ENCODE measurements at regions of chr14 and their contacts with region 1.

Region 1: GRCh38 chr14:100108042-100108825 is 43.0 kb downstream of the EVL start:
- DNase-seq: peak; percentile 88
- H3K4me3 Mint-ChIP-seq: no peak overlapping the region
- H3K27ac Mint-ChIP-seq: peak overlapping the region; percentile 87
- H3K4me1 Mint-ChIP-seq: peaks cover 80% of the 10 kb centered on the region
- H3K27me3 Mint-ChIP-seq: no peaks in the 10 kb centered on the region

Region 2: DNA sequence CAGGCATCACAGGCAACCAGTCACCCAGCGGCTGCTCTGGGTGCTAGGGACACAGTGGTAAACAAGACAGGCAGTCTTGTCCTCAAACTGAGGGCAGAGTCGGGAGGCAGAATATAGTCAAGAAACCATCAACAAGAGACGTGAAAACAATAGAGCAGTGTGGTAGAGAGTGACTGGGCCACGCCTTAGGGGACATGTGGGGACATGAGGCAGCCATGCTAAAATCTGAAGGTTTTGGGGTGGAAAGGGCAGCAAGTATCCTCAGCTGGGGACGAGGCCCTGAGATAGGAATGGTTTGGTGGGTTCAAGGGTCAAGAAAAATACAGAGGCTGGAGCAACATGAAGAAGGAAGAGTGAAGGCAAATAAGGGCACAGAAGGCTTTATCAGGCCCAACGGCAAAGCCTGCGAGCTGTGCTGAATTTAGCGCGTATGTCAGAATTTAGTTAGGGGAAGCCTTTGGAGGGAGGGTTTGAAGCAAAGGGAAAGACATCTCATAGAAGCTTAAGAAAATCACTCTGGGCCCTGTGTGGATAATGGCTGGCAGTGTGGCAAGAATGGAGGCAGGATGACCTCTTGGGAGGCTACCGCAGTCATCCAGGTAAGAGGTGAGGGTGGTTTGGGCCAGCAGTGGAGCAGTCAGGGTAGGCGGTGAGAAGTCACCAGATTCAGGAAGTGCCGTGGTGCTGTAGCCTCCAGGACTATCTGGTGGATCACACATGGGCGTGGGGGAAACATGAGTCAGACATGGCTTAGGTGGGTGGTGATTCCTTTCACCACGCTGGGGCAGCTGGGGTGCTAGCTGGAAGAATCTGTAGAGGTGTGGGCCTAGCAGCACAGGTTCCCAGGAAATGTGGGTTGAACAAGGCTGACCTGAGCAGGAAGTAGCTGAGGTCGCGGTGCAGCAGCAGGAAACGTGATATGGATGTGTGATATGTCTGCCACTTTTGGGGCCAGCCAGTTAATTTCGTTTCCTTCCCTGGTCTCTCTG is 40.0 kb before region 1 on chr14:
- CTCF ChIA-PET with region 1: interaction called, 56 read pairs
- POLR2A ChIA-PET with region 1: interaction called, 6 read pairs
- DNase-seq: peak; percentile 92
- H3K4me3 Mint-ChIP-seq: peak overlapping the region; percentile 92
- H3K27ac Mint-ChIP-seq: peak overlapping the region; percentile 98
- H3K4me1 Mint-ChIP-seq: peaks cover 41% of the 10 kb centered on the region
- H3K27me3 Mint-ChIP-seq: no peaks in the 10 kb centered on the region

Region 3: DNA sequence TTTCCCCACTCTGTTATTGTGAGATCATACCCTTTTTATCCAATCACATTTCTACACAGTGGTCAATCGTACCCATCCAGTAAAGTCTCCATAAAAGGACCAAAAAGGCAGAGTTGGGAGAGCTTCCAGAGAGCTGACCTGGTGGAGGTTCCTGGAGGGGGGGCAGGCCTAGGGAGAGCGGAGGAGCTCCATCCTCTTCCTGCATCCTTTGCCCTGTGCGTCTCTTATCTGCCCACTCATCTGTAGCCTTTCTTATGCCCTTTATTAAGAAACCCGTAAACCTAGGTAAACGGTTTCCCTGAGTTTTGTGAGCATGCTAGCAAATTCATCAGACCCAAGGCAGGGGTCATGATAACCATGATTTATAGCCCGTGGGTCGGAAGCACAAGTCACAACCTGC is 16.8 kb before region 1 on chr14:
- CTCF ChIA-PET with region 1: interaction called, 10 read pairs
- POLR2A ChIA-PET with region 1: no interaction called
- DNase-seq: no peak
- H3K4me3 Mint-ChIP-seq: no peak overlapping the region
- H3K27ac Mint-ChIP-seq: peak overlapping the region; percentile 77
- H3K4me1 Mint-ChIP-seq: peaks cover 91% of the 10 kb centered on the region
- H3K27me3 Mint-ChIP-seq: no peaks in the 10 kb centered on the region